ENCODE measurements at regions of chr12 and their contacts with region 1.

Region 1: GRCh38 chr12:116138781-116139180 is 138.7 kb downstream of the MED13L start:
- DNase-seq: no peak
- ATAC-seq: no peak
- H3K4me3 ChIP-seq: no peak overlapping the region
- H3K27ac ChIP-seq: peak overlapping the region; percentile 5; the same call in 1 of the 2 replicates
- H3K4me1 ChIP-seq: peaks cover 65% of the 10 kb centered on the region
- H3K27me3 ChIP-seq: no peaks in the 10 kb centered on the region
- CTCF ChIP-seq: no peak

Region 2: DNA sequence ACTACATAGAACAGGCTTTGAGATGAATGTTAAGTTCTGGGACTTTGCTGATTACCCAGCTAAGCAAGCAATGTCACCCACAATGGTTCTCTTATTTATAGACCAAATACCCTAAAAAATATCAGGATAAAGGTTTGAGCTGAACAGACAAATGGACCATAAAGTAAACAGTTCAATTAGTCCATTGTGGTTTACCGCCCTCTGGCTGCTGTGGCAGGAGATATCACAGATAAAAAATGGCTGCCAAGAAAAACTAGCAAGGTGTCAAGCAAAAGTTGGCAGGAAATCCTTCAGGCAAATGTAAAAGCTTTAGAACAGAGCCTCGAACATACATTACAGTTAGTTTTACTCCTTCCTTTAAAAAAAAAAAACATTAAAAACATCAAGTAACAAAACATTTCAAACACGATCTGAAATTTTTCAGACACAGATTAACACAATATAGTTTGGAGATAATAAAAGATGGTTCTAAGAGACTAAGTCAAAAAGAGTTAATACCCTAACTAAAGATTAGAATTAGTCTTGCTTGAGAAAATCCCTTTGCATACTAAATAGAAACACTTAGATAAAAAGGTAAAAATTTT is 97.5 kb after region 1 on chr12:
- CTCF ChIA-PET with region 1: interaction called, 10 read pairs
- POLR2A ChIA-PET with region 1: no interaction called
- in situ Hi-C with region 1: no loop called
- intact Hi-C with region 1: no loop called
- DNase-seq: peak; percentile 32
- ATAC-seq: peak; percentile 72; the same call in 1 of the 2 replicates
- H3K4me3 ChIP-seq: no peak overlapping the region
- H3K27ac ChIP-seq: peak overlapping the region; percentile 60
- H3K4me1 ChIP-seq: peaks cover 29% of the 10 kb centered on the region
- H3K27me3 ChIP-seq: no peaks in the 10 kb centered on the region
- CTCF ChIP-seq: peak; percentile 76

Region 3: GRCh38 chr12:116390401-116391335 is 251.9 kb after region 1 on chr12:
- CTCF ChIA-PET with region 1: no interaction called
- POLR2A ChIA-PET with region 1: interaction called, 12 read pairs
- in situ Hi-C with region 1: no loop called
- intact Hi-C with region 1: no loop called
- DNase-seq: no peak
- ATAC-seq: peak; percentile 64
- H3K4me3 ChIP-seq: no peak overlapping the region
- H3K27ac ChIP-seq: peak overlapping the region; percentile 88
- H3K4me1 ChIP-seq: peaks cover 39% of the 10 kb centered on the region
- H3K27me3 ChIP-seq: no peaks in the 10 kb centered on the region
- CTCF ChIP-seq: no peak